Right lobe of liver (tissue), 6 donors: ENCODE measurements at regions of chr16 and their contacts with region 1.

Region 1: DNA sequence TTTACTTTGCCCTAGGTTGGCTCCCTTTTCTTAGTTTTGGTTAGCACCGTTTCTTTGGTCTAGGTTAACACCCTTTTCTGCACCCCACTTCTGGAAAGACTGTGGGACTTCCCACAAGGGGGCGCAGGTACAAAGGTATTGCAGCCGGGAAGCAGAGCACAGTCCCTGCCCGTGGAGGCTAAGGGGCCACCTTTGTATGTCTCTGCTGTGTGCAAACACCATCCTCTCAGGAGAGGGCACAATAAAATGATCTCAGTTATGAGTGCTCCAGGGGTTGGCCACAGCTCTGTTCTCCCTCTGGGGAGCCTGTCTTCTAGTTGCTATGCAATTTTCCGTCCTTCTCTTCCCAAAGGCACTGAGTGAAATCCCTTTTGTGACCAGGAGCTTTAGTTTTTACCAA is 28.4 kb upstream of the TMC5 start:
- DNase-seq: peak; percentile 62 to 75 (median 71)
- ATAC-seq: peak; percentile 98
- H3K4me3 ChIP-seq: no peak overlapping the region
- H3K27ac ChIP-seq: no peak overlapping the region
- H3K4me1 ChIP-seq: no peaks in the 10 kb centered on the region
- H3K27me3 ChIP-seq: no peaks in the 10 kb centered on the region
- CTCF ChIP-seq: peak; percentile 62 to 79 (median 68)
- POLR2A ChIP-seq: no peak

Region 2: GRCh38 chr16:19497176-19497575 is 107.9 kb after region 1 on chr16:
- intact Hi-C with region 1: loop called (anchors 5 to 10 kb)
- DNase-seq: no peak
- ATAC-seq: peak in 1 of 4 donors; percentile 52
- H3K4me3 ChIP-seq: no peak overlapping the region
- H3K27ac ChIP-seq: no peak overlapping the region
- H3K4me1 ChIP-seq: no peaks in the 10 kb centered on the region
- H3K27me3 ChIP-seq: no peaks in the 10 kb centered on the region
- CTCF ChIP-seq: no peak
- POLR2A ChIP-seq: no peak

Region 3: DNA sequence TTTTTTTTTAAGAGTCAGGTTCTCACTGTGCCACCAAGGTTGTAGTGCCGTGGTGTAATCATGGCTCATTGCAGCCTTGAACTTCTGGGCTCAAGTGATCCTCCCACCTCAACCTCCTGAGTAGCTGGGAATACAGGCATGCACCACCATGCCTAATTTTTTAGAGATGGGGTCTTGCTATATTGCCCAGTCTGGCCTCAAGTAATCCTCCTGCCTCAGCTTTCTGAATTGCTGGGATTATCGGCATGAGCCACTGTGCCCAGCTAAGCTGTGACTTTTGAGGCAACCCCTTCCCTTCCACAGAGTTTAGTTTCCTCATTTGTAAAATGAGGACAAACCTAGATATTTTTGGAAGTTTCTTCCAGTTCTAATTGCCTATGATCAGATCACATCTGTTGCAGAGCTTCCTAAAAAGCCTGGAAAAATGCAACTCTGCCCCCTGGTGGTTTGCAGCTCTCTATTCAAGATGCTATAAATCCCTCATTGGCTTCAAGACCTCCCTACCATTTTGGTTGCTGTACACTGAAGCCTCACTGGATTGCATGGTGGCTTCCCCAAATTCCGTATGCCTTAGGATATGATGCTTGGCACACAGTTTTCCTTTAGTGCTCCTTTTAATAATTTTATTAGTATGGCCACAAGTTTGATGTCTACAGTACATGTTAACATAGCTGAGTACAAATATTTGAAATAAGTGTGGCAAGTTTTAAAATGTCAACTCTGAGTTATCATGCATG is 113.3 kb after region 1 on chr16:
- intact Hi-C with region 1: loop called (anchors 5 to 10 kb)
- DNase-seq: peak in 2 of 3 donors; percentile 69 to 78
- ATAC-seq: peak; percentile 88 to 92 (median 89)
- H3K4me3 ChIP-seq: no peak overlapping the region
- H3K27ac ChIP-seq: no peak overlapping the region
- H3K4me1 ChIP-seq: no peaks in the 10 kb centered on the region
- H3K27me3 ChIP-seq: no peaks in the 10 kb centered on the region
- CTCF ChIP-seq: peak; percentile 79 to 89 (median 84)
- POLR2A ChIP-seq: no peak